ENCODE measurements at regions of chr5 and their contacts with region 1.

Region 1: GRCh38 chr5:138601444-138601843 is 26.2 kb upstream of the HSPA9 start:
- DNase-seq: no peak
- H3K4me3 ChIP-seq: no peak overlapping the region
- H3K27ac ChIP-seq: no peak overlapping the region
- H3K4me1 ChIP-seq: peaks cover 2% of the 10 kb centered on the region
- H3K27me3 ChIP-seq: no peaks in the 10 kb centered on the region
- CTCF ChIP-seq: no peak

Region 2: GRCh38 chr5:139051392-139051791 is 449.9 kb after region 1 on chr5:
- CTCF ChIA-PET with region 1: no interaction called
- POLR2A ChIA-PET with region 1: no interaction called
- intact Hi-C with region 1: no loop called
- DNase-seq: no peak
- H3K4me3 ChIP-seq: no peak overlapping the region
- H3K27ac ChIP-seq: no peak overlapping the region
- H3K4me1 ChIP-seq: peaks cover 18% of the 10 kb centered on the region
- H3K27me3 ChIP-seq: no peaks in the 10 kb centered on the region
- CTCF ChIP-seq: no peak

Region 3: GRCh38 chr5:139385061-139386049 is 783.9 kb after region 1 on chr5:
- CTCF ChIA-PET with region 1: no interaction called
- POLR2A ChIA-PET with region 1: interaction called, 25 read pairs
- intact Hi-C with region 1: no loop called
- DNase-seq: no peak
- H3K4me3 ChIP-seq: no peak overlapping the region
- H3K27ac ChIP-seq: no peak overlapping the region
- H3K4me1 ChIP-seq: peaks cover 13% of the 10 kb centered on the region
- H3K27me3 ChIP-seq: no peaks in the 10 kb centered on the region
- CTCF ChIP-seq: no peak

Measured in A673 (cell line).